Activated naive CD4-positive, alpha-beta T cell treated with anti-CD3 and anti-CD28 coated beads for 36 hours (primary cell): ENCODE measurements at regions of chr2 and their contacts with region 1.

Region 1: GRCh38 chr2:109213646-109214417 is 84.8 kb downstream of the SH3RF3 start:
- DNase-seq: peak; percentile 78
- H3K4me3 Mint-ChIP-seq: peak overlapping the region; percentile 49
- H3K27ac Mint-ChIP-seq: peak overlapping the region; percentile 54
- H3K4me1 Mint-ChIP-seq: peaks cover 70% of the 10 kb centered on the region
- H3K27me3 Mint-ChIP-seq: peaks cover 70% of the 10 kb centered on the region

Region 2: DNA sequence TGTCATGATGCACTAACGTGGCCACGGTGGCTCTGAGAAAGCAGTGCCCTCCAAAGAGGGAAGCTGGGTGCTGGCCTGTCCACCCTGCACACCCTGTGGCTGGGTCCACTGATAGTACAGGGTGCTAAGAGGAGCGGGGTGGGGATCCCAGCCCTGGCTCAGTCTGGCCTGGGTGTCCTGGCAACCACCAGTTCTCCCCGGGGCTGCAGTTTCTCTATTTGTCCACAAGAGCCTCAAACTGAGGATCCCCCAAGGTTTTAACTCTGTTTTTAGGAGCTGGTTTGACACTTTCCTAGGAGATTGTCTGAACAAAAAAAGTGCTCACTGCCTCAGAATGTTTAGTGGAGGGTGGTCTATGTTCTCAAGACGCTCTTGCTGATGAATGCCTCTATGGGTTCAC is 253.8 kb before region 1 on chr2:
- CTCF ChIA-PET with region 1: no interaction called
- intact Hi-C with region 1: loop called (anchors 10 kb)
- DNase-seq: no peak
- H3K4me3 Mint-ChIP-seq: no peak overlapping the region
- H3K27ac Mint-ChIP-seq: no peak overlapping the region
- H3K4me1 Mint-ChIP-seq: peaks cover 83% of the 10 kb centered on the region
- H3K27me3 Mint-ChIP-seq: no peaks in the 10 kb centered on the region

Region 3: GRCh38 chr2:109143214-109144187 is 70.3 kb before region 1 on chr2:
- CTCF ChIA-PET with region 1: no interaction called
- intact Hi-C with region 1: loop called (anchors 1 kb)
- DNase-seq: peak; percentile 90
- H3K4me3 Mint-ChIP-seq: no peak overlapping the region
- H3K27ac Mint-ChIP-seq: no peak overlapping the region
- H3K4me1 Mint-ChIP-seq: peaks cover 40% of the 10 kb centered on the region
- H3K27me3 Mint-ChIP-seq: peaks cover 8% of the 10 kb centered on the region

Region 4: DNA sequence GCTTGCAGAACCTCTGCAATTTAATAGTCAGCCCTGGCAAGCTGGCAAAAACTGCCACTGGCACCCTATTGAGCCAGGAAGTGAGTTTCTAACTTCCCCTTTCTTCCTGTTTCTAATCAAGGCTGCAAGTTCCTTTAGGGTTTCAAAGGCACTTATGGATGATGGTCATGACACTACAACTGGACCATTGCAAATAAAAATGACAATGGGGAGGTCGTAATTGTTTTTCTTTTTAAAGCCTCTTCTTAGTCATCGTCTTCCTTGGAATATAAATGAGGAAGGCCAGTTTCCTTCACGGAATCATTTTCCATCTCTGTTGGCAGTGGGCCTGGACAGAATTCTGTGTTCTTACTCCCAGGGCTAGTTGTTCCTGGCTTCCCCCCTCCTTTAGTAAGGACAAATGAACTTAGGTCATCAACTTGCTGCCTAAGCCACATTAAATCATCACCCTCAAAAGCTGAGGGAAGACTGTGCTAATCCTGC is 49.1 kb before region 1 on chr2:
- CTCF ChIA-PET with region 1: no interaction called
- intact Hi-C with region 1: loop called (anchors 5 kb)
- DNase-seq: no peak
- H3K4me3 Mint-ChIP-seq: no peak overlapping the region
- H3K27ac Mint-ChIP-seq: no peak overlapping the region
- H3K4me1 Mint-ChIP-seq: peaks cover 30% of the 10 kb centered on the region
- H3K27me3 Mint-ChIP-seq: no peaks in the 10 kb centered on the region

Region 5: GRCh38 chr2:109226128-109226527 is 12.3 kb after region 1 on chr2:
- CTCF ChIA-PET with region 1: no interaction called
- intact Hi-C with region 1: no loop called
- DNase-seq: no peak
- H3K4me3 Mint-ChIP-seq: no peak overlapping the region
- H3K27ac Mint-ChIP-seq: no peak overlapping the region
- H3K4me1 Mint-ChIP-seq: peaks cover 6% of the 10 kb centered on the region
- H3K27me3 Mint-ChIP-seq: no peaks in the 10 kb centered on the region

Region 6: GRCh38 chr2:109331896-109332848 is 118.3 kb after region 1 on chr2:
- CTCF ChIA-PET with region 1: no interaction called
- intact Hi-C with region 1: loop called (anchors 1 kb)
- DNase-seq: peak; percentile 55
- H3K4me3 Mint-ChIP-seq: peak overlapping the region; percentile 59
- H3K27ac Mint-ChIP-seq: no peak overlapping the region
- H3K4me1 Mint-ChIP-seq: peaks cover 35% of the 10 kb centered on the region
- H3K27me3 Mint-ChIP-seq: no peaks in the 10 kb centered on the region

Region 7: DNA sequence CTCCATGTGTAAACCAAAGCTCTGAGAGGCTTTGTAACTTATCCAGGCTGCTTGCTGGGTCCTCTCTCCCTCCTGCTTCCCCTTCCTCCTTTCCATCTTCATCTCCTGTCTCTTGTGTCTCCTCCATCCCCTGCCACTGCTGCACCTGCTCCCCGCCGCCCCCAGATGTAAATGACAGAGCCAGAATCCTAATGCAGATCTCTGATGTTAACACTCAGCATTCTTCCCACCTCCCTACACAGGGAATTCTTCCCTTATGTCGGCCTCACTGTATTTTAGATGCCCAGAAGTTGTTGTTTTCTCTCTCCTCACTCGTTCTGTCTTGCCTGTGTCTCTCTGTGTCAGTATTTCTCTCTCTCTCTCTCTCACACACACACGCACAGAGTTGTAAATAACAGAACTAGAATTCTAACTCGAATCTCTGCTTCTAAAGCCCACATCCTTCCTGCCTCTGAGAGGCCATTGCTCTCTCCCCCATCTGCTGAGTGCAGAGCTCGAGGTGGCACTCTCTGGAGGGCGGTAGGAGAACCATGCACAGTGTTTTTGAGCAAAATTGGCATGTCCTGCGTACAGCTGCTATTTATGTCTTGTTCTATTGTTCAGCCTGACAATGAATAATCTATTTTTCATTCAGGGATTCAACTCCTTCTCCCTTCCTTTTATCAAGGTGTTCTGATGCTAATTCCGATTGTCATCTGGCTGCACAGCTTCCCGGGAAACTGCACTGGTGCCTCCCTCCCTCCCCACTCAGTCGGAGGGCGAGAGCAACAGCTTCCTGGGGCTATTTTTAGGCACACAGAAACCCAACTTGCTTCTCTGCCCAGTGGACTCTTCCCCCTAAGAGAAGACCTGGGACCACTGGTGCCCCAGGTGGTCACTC is 135.1 kb after region 1 on chr2:
- CTCF ChIA-PET with region 1: no interaction called
- intact Hi-C with region 1: loop called (anchors 1 kb)
- DNase-seq: peak; percentile 72
- H3K4me3 Mint-ChIP-seq: peak overlapping the region; percentile 9
- H3K27ac Mint-ChIP-seq: peak overlapping the region; percentile 31
- H3K4me1 Mint-ChIP-seq: peaks cover 46% of the 10 kb centered on the region
- H3K27me3 Mint-ChIP-seq: no peaks in the 10 kb centered on the region

Region 8: GRCh38 chr2:109457794-109458193 is 244.0 kb after region 1 on chr2:
- CTCF ChIA-PET with region 1: no interaction called
- intact Hi-C with region 1: loop called (anchors 2 kb)
- DNase-seq: no peak
- H3K4me3 Mint-ChIP-seq: no peak overlapping the region
- H3K27ac Mint-ChIP-seq: no peak overlapping the region
- H3K4me1 Mint-ChIP-seq: peaks cover 19% of the 10 kb centered on the region
- H3K27me3 Mint-ChIP-seq: no peaks in the 10 kb centered on the region

Region 9: DNA sequence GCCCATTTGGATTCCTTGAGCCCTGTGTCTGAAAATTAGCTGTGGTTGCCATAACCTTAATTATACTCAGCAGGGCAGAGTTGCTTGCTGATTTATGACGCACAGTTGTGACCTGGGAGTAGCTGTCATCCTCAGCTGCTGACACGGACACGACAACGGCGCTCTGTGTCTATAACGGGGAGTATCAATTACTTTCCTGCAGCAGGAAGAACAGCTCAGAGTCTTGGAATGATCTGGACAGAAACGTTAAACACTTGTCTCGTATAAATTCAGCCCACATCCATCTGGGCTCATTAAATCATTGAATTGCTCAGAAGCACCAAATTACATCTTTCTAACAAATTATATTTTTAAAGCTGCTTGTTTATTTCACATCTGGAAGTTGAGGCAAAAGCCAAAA is 283.6 kb after region 1 on chr2:
- CTCF ChIA-PET with region 1: no interaction called
- intact Hi-C with region 1: no loop called
- DNase-seq: no peak
- H3K4me3 Mint-ChIP-seq: no peak overlapping the region
- H3K27ac Mint-ChIP-seq: no peak overlapping the region
- H3K4me1 Mint-ChIP-seq: no peaks in the 10 kb centered on the region
- H3K27me3 Mint-ChIP-seq: no peaks in the 10 kb centered on the region